Activated B cell treated with CpG ODN at 0.5 μM for 24 hours (primary cell): ENCODE measurements at regions of chr6 and their contacts with region 1.

Region 1: GRCh38 chr6:158910484-158911348 is 89.3 kb downstream of the RSPH3 start:
- DNase-seq: peak; percentile 36
- ATAC-seq: peak; percentile 76
- H3K4me3 Mint-ChIP-seq: peak overlapping the region; percentile 80
- H3K27ac Mint-ChIP-seq: peak overlapping the region; percentile 96
- H3K4me1 Mint-ChIP-seq: peaks cover 58% of the 10 kb centered on the region
- H3K27me3 Mint-ChIP-seq: no peaks in the 10 kb centered on the region
- CTCF ChIP-seq: no peak

Region 2: GRCh38 chr6:158923805-158924498 is 13.2 kb after region 1 on chr6:
- CTCF ChIA-PET with region 1: interaction called, 3 read pairs
- POLR2A ChIA-PET with region 1: interaction called, 3 read pairs
- intact Hi-C with region 1: loop called (anchors 2 kb)
- DNase-seq: no peak
- ATAC-seq: no peak
- H3K4me3 Mint-ChIP-seq: no peak overlapping the region
- H3K27ac Mint-ChIP-seq: no peak overlapping the region
- H3K4me1 Mint-ChIP-seq: peaks cover 11% of the 10 kb centered on the region
- H3K27me3 Mint-ChIP-seq: no peaks in the 10 kb centered on the region
- CTCF ChIP-seq: no peak

Region 3: DNA sequence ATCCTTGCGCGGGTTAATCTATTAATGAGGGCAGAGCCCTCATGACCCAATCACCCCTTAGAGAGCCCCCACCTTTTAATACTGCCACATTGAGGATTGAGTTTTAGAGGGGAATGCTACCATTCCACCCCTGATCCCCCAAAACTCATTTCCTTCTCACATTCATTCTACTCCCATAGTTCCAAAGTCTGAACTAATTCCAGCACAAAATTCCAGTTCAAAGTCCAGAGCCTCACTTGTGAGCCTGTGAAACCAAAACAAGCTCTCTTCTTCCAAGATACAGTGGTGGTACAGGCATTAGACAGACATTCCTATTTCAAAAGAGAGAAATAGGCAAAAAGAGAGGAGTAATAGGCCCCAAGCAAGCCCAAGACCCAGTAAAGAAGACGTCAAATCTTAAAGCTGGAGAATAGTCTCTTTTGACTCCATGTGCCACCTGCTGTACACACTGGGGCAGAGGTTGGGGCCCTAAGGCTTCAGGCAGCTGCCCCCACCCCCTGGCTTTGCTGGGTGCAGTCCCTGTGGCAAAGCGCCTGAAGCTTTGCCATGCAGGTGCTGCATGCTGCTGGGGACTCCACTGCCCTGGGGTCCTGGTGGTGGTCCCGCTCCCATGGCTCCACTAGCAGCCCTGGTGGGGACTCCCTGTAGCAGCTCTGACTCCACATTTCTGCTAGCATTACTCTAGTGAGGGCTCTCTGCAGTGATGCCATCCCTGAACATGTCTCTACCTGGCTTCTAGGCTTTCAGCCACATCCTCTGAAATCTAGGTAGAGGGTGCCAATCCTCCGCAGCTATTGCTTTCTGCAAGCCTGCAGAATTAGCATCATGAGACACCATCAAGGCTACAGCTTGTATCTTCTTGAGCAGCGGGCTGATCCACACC is 48.0 kb after region 1 on chr6:
- CTCF ChIA-PET with region 1: interaction called, 4 read pairs
- POLR2A ChIA-PET with region 1: no interaction called
- intact Hi-C with region 1: loop called (anchors 5 kb)
- DNase-seq: peak; percentile 20
- ATAC-seq: peak; percentile 87
- H3K4me3 Mint-ChIP-seq: no peak overlapping the region
- H3K27ac Mint-ChIP-seq: no peak overlapping the region
- H3K4me1 Mint-ChIP-seq: peaks cover 34% of the 10 kb centered on the region
- H3K27me3 Mint-ChIP-seq: no peaks in the 10 kb centered on the region
- CTCF ChIP-seq: no peak